ENCODE measurements at regions of chr6 and their contacts with region 1.

Region 1: GRCh38 chr6:70221025-70221714 is 81.7 kb downstream of the COL9A1 start:
- DNase-seq: no peak
- ATAC-seq: peak; percentile 37 to 62

Region 2: GRCh38 chr6:70292193-70292592 is 71.0 kb after region 1 on chr6:
- intact Hi-C with region 1: loop called in 1 of 2 experiments (anchors 5 kb)
- DNase-seq: no peak
- ATAC-seq: peak; percentile 53 to 56

Region 3: DNA sequence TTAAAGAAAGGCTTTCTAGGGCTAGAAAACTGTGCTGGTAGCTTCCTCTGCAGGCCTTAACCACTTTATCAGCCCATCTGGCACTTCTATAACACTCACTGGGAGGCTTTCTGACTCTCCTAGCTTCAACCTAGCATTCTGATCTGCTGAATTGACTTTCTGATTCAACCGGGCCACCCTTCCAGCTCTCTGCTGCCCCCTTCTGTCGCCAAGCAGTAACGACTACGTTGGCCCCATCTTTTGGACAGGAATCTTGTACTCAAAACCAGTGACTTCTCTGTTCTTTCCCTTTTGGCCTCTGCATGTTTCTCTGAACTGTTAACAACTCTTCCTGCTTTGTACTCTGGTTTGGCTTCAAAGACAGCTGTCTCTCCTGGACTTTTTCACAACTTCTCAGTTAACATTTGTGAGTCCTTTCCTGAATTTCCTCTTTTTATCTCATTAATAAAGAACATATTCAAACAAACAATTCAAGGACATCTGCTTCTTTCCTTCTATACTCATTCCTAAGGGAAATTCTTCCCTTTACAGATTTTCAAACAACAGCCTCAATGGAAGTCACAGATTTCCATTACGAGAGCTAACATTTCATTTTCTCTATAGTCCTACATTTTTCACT is 148.3 kb after region 1 on chr6:
- intact Hi-C with region 1: loop called in 1 of 2 experiments (anchors 2 kb)
- DNase-seq: no peak
- ATAC-seq: peak; percentile 78 to 79